ENCODE measurements at regions of chr12 and their contacts with region 1.

Region 1: GRCh38 chr12:66087365-66087943 is 43.1 kb downstream of the LLPH start:
- DNase-seq: peak; percentile 66 to 78
- H3K4me3 ChIP-seq: no peak overlapping the region
- H3K4me3 Mint-ChIP-seq: no peak overlapping the region
- H3K27ac Mint-ChIP-seq: no peak overlapping the region
- H3K4me1 ChIP-seq: peaks cover 19% of the 10 kb centered on the region
- H3K4me1 Mint-ChIP-seq: peaks cover 13% of the 10 kb centered on the region
- H3K27me3 ChIP-seq: no peaks in the 10 kb centered on the region
- H3K27me3 Mint-ChIP-seq: no peaks in the 10 kb centered on the region
- CTCF ChIP-seq: peak; percentile 73 to 81

Region 2: GRCh38 chr12:65306366-65307168 is 780.9 kb before region 1 on chr12:
- CTCF ChIA-PET with region 1: no interaction called
- POLR2A ChIA-PET with region 1: no interaction called
- intact Hi-C with region 1: loop called (anchors 1 kb)
- DNase-seq: peak in 1 of 2 experiments; percentile 52
- H3K4me3 ChIP-seq: peak overlapping the region; percentile 12; the same call in 1 of the 2 replicates
- H3K4me3 Mint-ChIP-seq: peak overlapping the region; percentile 67
- H3K27ac Mint-ChIP-seq: peak overlapping the region; percentile 55
- H3K4me1 ChIP-seq: peaks cover 5% of the 10 kb centered on the region
- H3K4me1 Mint-ChIP-seq: peaks cover 10% of the 10 kb centered on the region
- H3K27me3 ChIP-seq: no peaks in the 10 kb centered on the region
- H3K27me3 Mint-ChIP-seq: no peaks in the 10 kb centered on the region
- CTCF ChIP-seq: peak; percentile 53 to 75

Region 3: DNA sequence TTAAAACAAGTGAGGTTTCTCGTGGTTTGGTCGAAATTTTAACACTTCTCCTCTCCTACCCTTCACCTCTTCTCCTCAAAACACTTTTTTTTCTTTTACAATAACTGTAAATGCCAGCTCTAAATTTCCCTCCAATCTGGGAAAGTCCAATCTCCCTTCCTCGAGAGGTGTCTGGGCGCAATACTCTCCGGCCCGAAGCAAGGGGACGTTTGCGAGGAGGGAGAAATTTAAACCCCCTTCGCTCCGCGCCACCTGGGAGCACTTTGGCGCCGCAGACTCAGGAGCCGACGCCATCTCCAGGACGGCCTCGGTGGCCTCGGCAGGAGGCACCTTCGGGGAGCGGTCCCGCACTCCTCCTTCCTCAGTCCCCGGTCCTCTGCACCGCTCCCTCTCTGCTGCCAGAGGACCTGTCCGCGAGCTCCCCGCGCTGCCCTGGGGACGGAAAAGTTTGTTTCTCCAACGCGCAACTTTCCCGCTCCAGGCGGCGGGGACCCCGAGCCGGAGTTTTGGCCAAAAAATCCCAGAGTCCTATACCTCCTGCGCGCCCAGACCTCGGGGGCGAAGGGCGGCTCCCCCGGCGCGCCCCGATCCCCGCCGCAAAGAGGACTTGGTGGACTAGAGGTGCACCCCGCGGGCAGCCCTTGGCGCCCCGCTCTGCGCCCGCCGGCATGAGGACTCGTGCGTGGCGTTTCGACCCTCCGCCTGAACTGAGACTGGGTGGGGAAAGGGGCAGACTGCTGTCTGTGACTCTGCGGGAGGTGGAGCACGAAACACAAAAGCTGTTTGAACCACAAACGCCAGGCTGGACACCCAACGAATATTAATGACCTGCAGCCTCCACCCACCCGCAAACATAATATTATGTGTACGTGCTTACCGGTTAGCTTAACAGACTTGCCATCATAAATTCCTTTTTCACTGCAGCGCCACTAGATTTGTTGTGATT is 358.3 kb before region 1 on chr12:
- CTCF ChIA-PET with region 1: no interaction called
- POLR2A ChIA-PET with region 1: no interaction called
- intact Hi-C with region 1: no loop called
- DNase-seq: peak; percentile 23 to 29
- H3K4me3 ChIP-seq: peak overlapping the region; percentile 35
- H3K4me3 Mint-ChIP-seq: peak overlapping the region; percentile 69
- H3K27ac Mint-ChIP-seq: no peak overlapping the region
- H3K4me1 ChIP-seq: no peaks in the 10 kb centered on the region
- H3K4me1 Mint-ChIP-seq: no peaks in the 10 kb centered on the region
- H3K27me3 ChIP-seq: no peaks in the 10 kb centered on the region
- H3K27me3 Mint-ChIP-seq: peaks cover 16% of the 10 kb centered on the region
- CTCF ChIP-seq: no peak

Region 4: GRCh38 chr12:65823513-65824375 is 263.7 kb before region 1 on chr12:
- CTCF ChIA-PET with region 1: no interaction called
- POLR2A ChIA-PET with region 1: no interaction called
- intact Hi-C with region 1: loop called (anchors 2 kb)
- DNase-seq: peak; percentile 61 to 76
- H3K4me3 ChIP-seq: peak overlapping the region; percentile 70
- H3K4me3 Mint-ChIP-seq: peak overlapping the region; percentile 97
- H3K27ac Mint-ChIP-seq: peak overlapping the region; percentile 84
- H3K4me1 ChIP-seq: peaks cover 10% of the 10 kb centered on the region; the same call in 1 of the 2 replicates
- H3K4me1 Mint-ChIP-seq: peaks cover 5% of the 10 kb centered on the region
- H3K27me3 ChIP-seq: no peaks in the 10 kb centered on the region
- H3K27me3 Mint-ChIP-seq: no peaks in the 10 kb centered on the region
- CTCF ChIP-seq: no peak

Region 5: GRCh38 chr12:65925626-65926025 is 161.8 kb before region 1 on chr12:
- CTCF ChIA-PET with region 1: interaction called, 10 read pairs
- POLR2A ChIA-PET with region 1: no interaction called
- intact Hi-C with region 1: loop called (anchors 5 kb)
- DNase-seq: no peak
- H3K4me3 ChIP-seq: no peak overlapping the region
- H3K4me3 Mint-ChIP-seq: peak overlapping the region; percentile 64
- H3K27ac Mint-ChIP-seq: peak overlapping the region; percentile 49
- H3K4me1 ChIP-seq: peaks cover 43% of the 10 kb centered on the region
- H3K4me1 Mint-ChIP-seq: peaks cover 36% of the 10 kb centered on the region
- H3K27me3 ChIP-seq: no peaks in the 10 kb centered on the region
- H3K27me3 Mint-ChIP-seq: no peaks in the 10 kb centered on the region
- CTCF ChIP-seq: no peak

Region 6: DNA sequence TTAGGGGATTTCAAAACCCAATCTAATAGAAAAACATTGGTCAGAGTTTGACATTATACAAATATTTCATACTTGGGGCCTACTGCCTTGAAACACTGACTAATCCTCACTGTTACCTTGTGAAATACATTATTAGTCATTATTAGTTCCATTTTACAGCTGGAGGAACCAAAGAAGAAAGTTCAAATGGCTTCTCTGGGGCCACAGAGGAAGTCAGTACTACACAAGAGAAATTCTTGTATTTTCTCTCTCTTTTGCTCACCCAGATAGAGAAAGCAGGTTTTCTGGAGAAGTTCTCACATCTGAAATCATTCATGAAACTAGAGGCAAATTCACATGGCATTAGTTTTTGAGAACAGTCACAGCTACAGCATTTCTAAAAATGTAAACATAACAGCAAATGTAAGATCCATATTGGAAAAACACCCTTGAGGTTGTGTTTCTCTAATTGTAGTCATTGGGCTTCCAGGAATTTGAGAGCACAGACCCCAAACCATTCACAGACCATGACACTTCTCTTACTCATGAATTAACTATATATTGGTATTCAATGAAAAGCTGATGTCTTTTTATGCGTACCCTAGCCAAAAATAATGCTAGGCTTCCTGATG is 39.9 kb before region 1 on chr12:
- CTCF ChIA-PET with region 1: interaction called, 3 read pairs
- POLR2A ChIA-PET with region 1: no interaction called
- intact Hi-C with region 1: loop called (anchors 1 kb)
- DNase-seq: no peak
- H3K4me3 ChIP-seq: no peak overlapping the region
- H3K4me3 Mint-ChIP-seq: no peak overlapping the region
- H3K27ac Mint-ChIP-seq: no peak overlapping the region
- H3K4me1 ChIP-seq: peaks cover 41% of the 10 kb centered on the region
- H3K4me1 Mint-ChIP-seq: peaks cover 10% of the 10 kb centered on the region
- H3K27me3 ChIP-seq: no peaks in the 10 kb centered on the region
- H3K27me3 Mint-ChIP-seq: no peaks in the 10 kb centered on the region
- CTCF ChIP-seq: no peak

Region 7: DNA sequence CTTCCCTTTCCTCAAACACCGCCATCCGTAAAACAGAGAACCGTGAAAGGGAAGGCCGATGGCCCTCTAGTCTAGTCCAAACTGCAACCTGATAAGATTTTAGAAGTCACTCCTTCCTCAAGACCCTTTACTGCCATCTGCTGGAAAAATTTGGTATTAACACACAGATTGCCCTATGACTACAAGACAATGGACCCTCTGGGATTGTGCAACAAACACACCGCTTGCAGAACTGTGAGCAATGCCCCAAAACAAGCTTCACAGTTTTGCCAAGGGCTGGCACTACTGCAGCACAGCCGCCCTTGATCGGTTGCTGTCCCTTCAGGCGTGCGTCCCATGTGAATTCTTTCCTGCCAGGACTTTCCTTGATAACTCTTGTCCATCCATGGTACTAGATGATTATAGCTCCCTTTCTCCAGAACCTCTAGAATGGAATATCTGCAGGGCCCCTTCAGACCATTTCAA is 20.0 kb after region 1 on chr12:
- CTCF ChIA-PET with region 1: interaction called, 4 read pairs
- POLR2A ChIA-PET with region 1: no interaction called
- intact Hi-C with region 1: loop called (anchors 1 kb)
- DNase-seq: peak; percentile 79 to 92
- H3K4me3 ChIP-seq: no peak overlapping the region
- H3K4me3 Mint-ChIP-seq: peak overlapping the region; percentile 47
- H3K27ac Mint-ChIP-seq: no peak overlapping the region
- H3K4me1 ChIP-seq: peaks cover 7% of the 10 kb centered on the region; the same call in 1 of the 2 replicates
- H3K4me1 Mint-ChIP-seq: peaks cover 15% of the 10 kb centered on the region
- H3K27me3 ChIP-seq: no peaks in the 10 kb centered on the region
- H3K27me3 Mint-ChIP-seq: no peaks in the 10 kb centered on the region
- CTCF ChIP-seq: peak; percentile 61 to 80

Region 8: GRCh38 chr12:66176105-66176900 is 88.8 kb after region 1 on chr12:
- CTCF ChIA-PET with region 1: no interaction called
- POLR2A ChIA-PET with region 1: no interaction called
- intact Hi-C with region 1: no loop called
- DNase-seq: no peak
- H3K4me3 ChIP-seq: no peak overlapping the region
- H3K4me3 Mint-ChIP-seq: no peak overlapping the region
- H3K27ac Mint-ChIP-seq: no peak overlapping the region
- H3K4me1 ChIP-seq: peaks cover 10% of the 10 kb centered on the region
- H3K4me1 Mint-ChIP-seq: no peaks in the 10 kb centered on the region
- H3K27me3 ChIP-seq: no peaks in the 10 kb centered on the region; the same call in 1 of the 2 replicates
- H3K27me3 Mint-ChIP-seq: peaks cover 8% of the 10 kb centered on the region
- CTCF ChIP-seq: no peak

Measured in Caco-2 (cell line).